AG04449 (cell line): ENCODE measurements at regions of chr15 and their contacts with region 1.

Region 1: GRCh38 chr15:77107531-77108355 is 36.8 kb upstream of the TSPAN3 start:
- DNase-seq: no peak
- H3K4me3 ChIP-seq: no peak overlapping the region
- CTCF ChIP-seq: peak; percentile 82

Region 2: DNA sequence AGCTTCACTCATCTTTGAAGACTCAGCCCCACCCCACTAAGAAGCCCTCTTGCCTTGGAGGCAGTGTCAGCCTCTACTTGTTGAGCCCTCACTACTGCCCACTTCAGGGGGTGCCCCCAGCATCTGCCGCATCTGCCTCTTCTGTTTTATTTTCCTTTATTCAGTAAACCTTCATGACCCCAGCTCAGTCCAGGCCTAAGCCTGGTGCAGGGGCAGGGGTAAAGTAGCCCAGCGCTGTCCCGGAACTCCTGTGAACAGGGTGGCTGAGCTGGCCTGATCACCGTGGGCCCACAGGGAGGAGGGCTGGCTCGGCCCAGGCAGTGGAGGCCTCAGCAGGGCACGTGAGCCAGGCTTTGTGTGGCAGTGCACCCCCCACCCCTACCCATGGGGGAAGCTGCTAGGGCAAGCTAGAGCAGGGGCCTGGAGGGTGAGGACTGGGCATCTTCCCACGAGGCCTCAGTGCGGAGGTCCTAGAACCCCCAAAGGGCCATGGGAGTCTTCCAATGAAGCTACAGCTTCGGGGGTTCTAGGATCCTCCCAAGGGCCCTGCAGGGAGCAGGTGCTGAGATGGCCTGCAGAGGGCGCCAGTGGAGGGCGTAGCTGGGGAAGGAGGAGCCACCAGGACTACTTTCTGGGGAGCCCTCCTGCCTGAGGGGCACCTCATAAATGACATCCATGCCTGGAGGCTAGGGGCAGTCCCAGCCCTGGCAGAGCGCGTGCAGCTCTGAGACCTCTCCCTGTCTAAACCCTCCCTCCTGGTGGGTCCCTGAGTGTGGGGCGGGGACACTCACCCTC is 72.9 kb before region 1 on chr15:
- CTCF ChIA-PET with region 1: interaction called, 11 read pairs
- POLR2A ChIA-PET with region 1: no interaction called
- DNase-seq: no peak
- H3K4me3 ChIP-seq: no peak overlapping the region
- CTCF ChIP-seq: peak; percentile 69